HEK293T (cell line): ENCODE measurements at regions of chr17 and their contacts with region 1.

Region 1: DNA sequence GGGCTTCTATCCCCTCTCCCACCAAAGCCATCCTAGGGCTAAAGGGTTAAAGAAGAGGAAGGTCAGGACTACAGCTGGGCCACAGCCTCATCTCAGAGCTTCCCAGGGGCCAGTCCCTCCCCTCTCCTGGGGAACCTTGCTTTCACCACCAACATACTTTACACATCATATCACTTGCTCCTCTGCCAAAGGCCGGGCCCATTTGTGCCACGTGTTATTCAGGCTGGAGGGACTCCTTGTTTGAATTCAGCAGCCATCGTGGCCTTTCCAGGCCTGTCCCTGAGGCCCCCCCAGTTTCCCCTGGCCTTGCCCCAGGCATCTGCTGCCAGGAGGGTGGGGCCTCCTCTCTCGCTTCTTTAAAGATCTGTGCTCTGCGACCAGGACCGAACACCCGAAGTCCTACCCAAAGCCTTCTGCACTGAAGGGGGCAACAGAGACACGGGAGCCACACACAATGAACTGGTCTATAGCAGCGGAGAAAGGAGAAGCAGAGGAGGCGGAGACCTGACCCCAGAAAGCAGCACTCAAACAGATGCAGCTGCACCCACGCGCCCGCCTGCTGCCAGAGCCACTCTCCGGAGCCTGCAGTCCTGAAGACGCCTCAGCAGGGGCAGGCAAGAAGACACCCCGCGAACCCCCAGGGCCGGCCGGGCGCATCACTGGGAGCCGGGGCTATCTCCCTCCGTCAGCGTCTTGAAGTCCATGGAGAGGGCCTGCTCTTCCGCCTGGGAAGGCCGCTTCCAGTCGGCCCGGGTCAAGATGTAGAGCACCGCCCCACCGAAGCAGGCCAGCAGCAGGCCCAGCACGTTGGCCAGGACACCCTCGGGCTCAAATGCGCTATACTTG is 12.1 kb downstream of the CYB561 start:
- DNase-seq: no peak

Region 2: DNA sequence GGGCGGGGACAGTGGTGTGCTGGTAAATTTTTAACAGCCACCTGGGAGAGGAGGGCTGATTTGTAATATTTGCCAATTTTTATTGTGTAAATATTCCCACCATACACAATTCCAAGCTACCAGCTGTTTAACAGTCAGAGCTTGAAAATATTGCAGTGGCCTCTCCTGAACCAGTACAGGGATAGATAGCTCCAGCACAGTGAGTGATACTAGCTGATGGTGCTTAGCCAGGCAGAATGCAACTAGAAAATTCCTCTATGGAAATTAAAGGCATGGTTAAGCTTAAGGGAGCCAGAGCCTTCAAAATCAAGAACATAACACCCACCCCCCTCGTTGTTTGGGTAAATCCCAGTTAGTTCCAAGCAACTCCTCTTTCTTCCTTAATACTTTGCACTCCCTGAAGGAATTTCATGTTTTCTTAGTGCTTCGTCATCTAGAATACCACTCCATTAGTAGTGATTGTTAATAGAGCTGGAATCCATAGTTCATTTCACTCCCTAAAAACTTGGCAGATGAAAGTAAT is 84.4 kb before region 1 on chr17:
- CTCF ChIA-PET with region 1: no interaction called
- POLR2A ChIA-PET with region 1: no interaction called
- DNase-seq: no peak

Region 3: DNA sequence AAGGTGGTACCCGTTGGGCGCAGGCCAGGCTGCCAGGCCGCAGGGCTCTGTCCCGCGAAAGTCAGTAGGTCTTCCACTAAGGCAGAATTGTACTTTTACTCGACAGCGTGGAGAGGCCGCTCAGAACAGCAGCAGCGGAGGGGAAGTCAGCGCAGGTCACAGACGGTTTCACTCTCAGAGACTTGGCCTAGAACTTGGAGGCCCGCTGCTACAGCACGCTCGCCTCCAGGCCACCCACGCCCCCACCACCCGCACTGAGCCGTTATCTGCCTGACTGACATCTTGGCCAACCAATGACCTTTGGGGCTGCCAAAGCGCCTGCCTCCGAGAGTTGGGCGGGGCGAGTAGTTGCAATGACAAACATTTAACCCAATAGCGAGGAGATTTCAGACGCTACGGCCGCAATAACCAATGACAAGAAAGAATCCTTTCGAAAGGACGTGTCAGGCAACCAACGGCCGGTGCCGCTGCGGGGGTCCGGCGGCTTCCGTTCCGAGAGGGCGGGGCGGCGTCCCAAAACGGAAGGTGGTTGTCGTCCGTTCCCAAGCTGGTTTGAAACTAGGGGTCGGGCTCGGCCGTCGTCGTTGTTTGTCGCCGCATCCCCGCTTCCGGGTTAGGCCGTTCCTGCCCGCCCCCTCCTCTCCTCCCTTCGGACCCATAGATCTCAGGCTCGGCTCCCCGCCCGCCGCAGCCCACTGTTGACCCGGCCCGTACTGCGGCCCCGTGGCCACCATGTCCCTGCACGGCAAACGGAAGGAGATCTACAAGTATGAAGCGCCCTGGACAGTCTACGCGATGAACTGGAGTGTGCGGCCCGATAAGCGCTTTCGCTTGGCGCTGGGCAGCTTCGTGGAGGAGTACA is 116.2 kb after region 1 on chr17 and contains the start of gene DCAF7:
- CTCF ChIA-PET with region 1: interaction called, 3 read pairs
- POLR2A ChIA-PET with region 1: interaction called, 10 read pairs
- DNase-seq: peak; percentile 99